PC-3 (cell line): ENCODE measurements at regions of chr4 and their contacts with region 1.

Region 1: DNA sequence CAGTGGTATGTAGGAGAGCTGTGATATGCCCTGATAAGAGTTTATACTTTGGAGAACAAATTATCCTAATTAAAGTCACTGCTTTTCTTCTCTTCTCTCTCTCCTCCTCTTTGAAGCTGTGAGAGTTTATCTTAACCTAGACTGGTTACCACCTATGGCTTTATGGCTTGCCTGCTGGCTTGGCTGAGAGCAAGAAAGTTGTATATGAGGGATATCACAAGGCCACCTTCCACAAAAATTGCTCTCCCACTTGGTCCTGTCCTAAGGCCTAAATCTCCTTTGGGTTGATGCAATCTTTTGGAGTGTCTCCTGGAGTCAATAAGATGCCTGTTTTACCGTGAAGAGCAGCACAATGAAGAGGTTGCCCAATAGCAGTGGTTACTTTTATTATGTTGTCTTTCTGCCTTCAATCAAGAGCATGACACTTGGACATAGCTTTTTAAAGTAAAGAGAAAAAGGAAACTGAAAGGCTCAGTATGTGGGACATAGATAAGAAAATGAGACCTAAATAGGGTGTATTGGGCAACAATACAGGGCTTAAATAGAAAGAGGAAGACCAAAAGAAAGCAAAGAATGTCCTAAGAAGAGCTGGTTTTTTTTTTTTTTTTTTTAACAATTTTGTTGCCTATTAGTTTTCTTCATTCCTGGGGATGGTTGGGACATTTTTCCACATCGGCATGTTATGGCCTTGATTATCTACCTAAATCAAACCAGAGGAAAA is 9.2 kb downstream of the GUCY1A1 start:
- DNase-seq: peak; percentile 46
- ATAC-seq: no peak
- H3K4me3 ChIP-seq: no peak overlapping the region
- H3K27ac ChIP-seq: peak overlapping the region; percentile 23; the same call in 1 of the 2 replicates
- H3K4me1 ChIP-seq: peaks cover 48% of the 10 kb centered on the region
- H3K27me3 ChIP-seq: no peaks in the 10 kb centered on the region
- CTCF ChIP-seq: no peak

Region 2: DNA sequence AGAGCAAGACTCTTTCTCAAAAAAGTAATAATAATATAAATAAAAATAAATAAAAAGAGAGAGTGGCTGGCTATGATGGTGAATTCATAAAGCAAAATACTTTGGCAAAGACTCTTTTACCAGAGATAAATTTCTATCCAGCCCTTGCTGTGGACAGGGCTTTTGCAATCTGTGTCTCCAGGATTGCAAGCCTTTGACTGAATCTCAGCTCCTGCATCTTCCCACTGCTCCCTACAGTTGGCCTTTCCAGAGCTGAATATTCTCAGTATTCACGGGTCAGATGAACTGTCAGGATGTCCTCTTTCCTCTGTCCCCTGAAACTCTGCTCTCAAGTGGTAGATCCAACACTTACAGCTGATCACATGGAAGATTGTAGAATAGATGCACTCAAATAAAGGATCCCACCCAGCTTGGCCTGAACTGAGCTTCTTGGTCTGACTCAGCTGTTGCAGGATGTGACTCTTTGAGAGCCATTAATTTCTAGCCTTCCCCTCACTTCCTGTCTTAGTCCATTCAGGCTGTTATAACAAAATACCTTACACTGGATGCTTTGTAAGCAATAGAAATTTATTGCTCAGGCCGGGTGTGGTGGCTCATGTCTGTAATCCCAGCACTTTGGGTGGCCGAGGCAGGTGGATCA is 132.6 kb before region 1 on chr4:
- CTCF ChIA-PET with region 1: no interaction called
- POLR2A ChIA-PET with region 1: no interaction called
- intact Hi-C with region 1: loop called (anchors 5 kb)
- DNase-seq: peak; percentile 77
- ATAC-seq: peak; percentile 95
- H3K4me3 ChIP-seq: no peak overlapping the region
- H3K27ac ChIP-seq: peak overlapping the region; percentile 71
- H3K4me1 ChIP-seq: peaks cover 16% of the 10 kb centered on the region
- H3K27me3 ChIP-seq: no peaks in the 10 kb centered on the region
- CTCF ChIP-seq: no peak